Left cardiac atrium (tissue), 4 donors: ENCODE measurements at regions of chr9 and their contacts with region 1.

Region 1: DNA sequence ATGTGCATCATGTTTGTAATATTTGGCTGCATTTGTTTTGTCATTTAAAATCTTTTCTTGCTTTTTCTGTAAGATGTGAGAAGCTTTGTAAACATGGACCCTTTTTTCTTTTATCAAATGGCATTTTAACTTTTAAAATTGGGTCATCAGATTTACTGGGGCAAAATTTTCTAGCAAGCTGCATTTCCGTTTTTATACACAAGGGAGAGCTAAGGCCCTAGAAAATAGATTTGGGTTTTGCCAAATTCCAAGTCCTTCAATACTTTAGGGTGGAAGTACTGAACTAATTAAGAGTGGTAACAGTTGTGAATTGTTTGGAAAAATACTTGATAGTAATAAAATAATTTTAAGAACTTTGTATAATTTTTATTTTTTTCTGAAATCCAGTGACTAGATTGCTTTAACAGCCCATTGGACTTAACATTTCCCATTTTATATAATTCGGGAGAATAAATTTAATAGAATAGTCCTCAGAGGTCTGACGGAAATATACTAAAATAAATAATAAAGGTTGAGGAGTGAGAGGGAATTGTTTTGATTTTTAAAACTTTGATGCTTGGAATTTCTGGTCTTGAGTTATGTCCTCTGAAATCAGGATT is 117.4 kb downstream of the SMARCA2 start:
- DNase-seq: no peak
- ATAC-seq: peak; percentile 38 to 41

Region 2: GRCh38 chr9:1946526-1947283 is 185.9 kb before region 1 on chr9:
- intact Hi-C with region 1: no loop called
- DNase-seq: no peak
- ATAC-seq: no peak

Region 3: DNA sequence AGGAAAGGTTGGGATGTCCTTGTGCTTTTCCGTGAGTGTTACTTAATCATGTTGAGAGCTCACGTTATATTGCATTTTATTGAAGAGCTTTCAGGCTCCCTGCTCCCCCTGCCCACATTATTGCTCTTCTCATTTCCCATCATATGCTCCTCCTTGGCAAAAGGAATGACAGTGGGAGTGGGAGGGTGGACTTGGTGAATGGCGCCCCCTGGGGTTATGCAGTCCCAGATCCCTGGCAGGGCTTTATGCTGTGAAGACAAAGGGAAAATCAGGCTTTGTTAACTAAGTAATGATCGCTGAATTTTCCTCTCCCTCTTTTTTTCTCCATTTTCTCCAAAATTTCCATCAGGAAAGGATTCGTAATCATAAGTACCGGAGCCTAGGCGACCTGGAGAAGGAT is 49.2 kb after region 1 on chr9:
- intact Hi-C with region 1: loop called in 1 of 2 experiments (anchors 5 kb)
- DNase-seq: no peak
- ATAC-seq: peak in 1 of 2 donors; percentile 32

Region 4: DNA sequence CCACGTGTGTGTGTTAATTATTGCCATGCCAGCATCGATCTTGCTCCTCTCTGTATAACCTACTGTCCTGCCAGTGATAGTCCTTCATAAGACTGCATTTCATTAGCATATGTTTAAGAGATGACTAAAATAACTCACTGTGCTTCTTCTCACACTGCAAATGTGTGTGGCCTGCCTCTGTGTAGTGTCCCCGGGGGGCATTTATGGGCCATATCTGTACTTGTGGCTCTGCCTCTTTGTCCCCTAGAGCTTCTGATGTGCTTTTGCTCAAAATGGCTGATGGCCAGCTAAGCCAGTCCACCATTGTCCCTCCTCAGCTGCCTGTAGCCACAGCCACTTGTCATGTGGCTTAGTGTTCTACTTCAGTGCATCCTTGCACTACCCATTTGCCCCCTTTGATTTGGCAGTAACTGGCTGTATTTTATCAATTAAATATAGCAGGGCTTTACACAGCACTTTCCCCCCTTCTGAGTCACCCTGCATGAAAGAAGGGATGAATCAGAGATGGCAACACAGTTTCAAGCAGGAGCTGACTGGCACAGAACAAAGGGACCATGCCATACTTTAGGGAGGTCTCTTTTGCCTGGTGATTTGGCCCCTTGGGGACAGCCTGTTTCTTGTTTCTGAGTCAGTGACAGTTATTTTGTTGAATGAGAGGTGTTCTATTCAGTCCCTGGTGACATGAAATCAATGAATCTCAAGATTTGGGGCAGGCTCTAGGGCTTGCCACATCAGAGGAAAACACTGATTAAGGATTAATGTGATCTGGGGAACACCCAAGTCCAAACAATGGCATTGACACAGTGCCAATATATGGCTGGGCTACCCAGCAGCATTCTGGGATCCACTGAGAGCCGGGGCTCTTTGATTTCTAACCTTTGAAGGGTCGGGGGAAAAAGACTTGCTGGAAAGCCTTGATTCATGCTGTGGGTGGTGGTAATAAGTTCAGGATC is 128.0 kb after region 1 on chr9:
- intact Hi-C with region 1: no loop called
- DNase-seq: no peak
- ATAC-seq: peak in 1 of 2 donors; percentile 93

Region 5: GRCh38 chr9:2271426-2271825 is 138.8 kb after region 1 on chr9:
- intact Hi-C with region 1: no loop called
- DNase-seq: no peak
- ATAC-seq: peak in 1 of 2 donors; percentile 58

Region 6: GRCh38 chr9:2729721-2730120 is 597.1 kb after region 1 on chr9:
- intact Hi-C with region 1: loop called in 1 of 2 experiments (anchors 5 kb)
- DNase-seq: no peak
- ATAC-seq: peak in 1 of 2 donors; percentile 8

Region 7: GRCh38 chr9:2837915-2838314 is 705.3 kb after region 1 on chr9:
- intact Hi-C with region 1: loop called in 1 of 2 experiments (anchors 5 kb)
- DNase-seq: no peak
- ATAC-seq: peak; percentile 57 to 62